ENCODE measurements at regions of chr17 and their contacts with region 1.

Region 1: GRCh38 chr17:30021708-30022317 is 80.4 kb downstream of the EFCAB5 start:
- DNase-seq: no peak
- ATAC-seq: no peak

Region 2: GRCh38 chr17:29807520-29808351 is 214.1 kb before region 1 on chr17:
- intact Hi-C with region 1: loop called (anchors 5 kb)
- DNase-seq: peak; percentile 56
- ATAC-seq: peak; percentile 68

Region 3: DNA sequence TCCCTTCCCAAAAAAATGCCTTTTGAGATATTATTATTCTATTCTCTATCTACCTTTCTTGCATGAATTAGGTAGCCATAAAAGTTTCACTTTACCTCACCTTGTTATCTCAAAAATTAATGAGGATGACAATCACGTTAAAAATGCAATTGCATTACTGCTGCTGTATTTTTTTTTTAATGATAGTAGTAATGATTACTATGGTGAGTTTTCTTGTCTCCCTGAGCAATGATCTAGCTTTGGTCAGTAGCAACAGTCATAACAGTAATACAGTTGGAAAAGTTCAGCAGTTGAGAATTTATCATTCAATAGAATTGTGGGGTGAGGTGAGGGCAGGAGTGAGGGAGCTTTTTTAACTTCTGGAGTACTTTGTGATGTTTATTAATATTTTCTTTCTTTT is 80.5 kb before region 1 on chr17 and contains the start of gene EFCAB5:
- intact Hi-C with region 1: no loop called
- DNase-seq: no peak
- ATAC-seq: no peak
- total RNA-seq, gene EFCAB5: not detected

Region 4: DNA sequence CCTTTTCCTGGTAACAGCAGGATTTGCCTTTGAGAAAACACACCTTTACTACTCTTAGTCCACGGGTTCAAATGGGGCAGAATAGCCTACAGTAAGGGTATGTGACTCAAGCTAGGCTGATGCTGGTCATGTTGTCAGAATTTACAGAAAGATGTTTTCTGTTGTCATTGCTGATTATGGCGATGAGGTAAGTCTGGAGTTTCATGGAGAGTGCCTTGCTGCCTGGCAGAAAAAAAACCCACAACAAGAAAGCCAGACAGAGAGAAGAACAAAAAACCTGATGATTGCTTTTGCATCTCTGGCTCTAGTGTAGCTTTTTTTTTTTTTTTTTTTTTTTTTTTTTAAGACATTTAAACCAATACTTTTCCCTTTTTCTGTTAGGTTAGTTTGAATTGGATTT is 165.8 kb after region 1 on chr17:
- intact Hi-C with region 1: no loop called
- DNase-seq: no peak
- ATAC-seq: no peak

Region 5: DNA sequence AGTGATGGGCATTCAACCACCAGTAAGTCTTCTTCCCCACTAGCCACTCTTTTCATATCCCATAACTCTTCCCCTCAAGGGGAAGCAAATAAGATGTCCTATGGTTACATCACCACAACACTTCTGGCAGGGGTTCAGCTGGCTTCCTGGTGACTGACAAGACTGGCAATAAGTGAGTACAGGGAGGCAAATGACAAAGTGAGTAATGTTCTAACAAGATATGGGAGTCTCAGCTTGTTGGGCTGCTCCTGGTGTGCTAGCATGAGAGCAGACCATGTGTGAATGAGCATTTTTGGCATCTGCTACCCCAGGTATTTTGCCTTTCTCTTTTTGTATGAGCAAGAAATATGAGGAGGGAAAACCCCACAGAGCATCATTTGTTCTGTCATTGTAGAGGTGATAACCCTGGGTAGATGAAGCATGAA is 302.1 kb after region 1 on chr17:
- intact Hi-C with region 1: no loop called
- DNase-seq: peak; percentile 54
- ATAC-seq: no peak

Measured in Right ventricle myocardium superior (tissue), 1 donor.